Natural killer cell (primary cell): ENCODE measurements at regions of chr19 and their contacts with region 1.

Region 1: GRCh38 chr19:45016388-45017319 is 15.4 kb downstream of the RELB start:
- DNase-seq: peak; percentile 75 to 93
- ATAC-seq: peak; percentile 76 to 90 (median 79)
- H3K4me3 ChIP-seq: no peak overlapping the region
- H3K4me3 Mint-ChIP-seq: peak overlapping the region; percentile 63
- H3K27ac ChIP-seq: peak overlapping the region; percentile 78
- H3K27ac Mint-ChIP-seq: peak overlapping the region; percentile 87 to 89
- H3K4me1 ChIP-seq: peaks cover 17% of the 10 kb centered on the region
- H3K4me1 Mint-ChIP-seq: peaks cover 8 to 14% of the 10 kb centered on the region in 2 donors
- H3K27me3 ChIP-seq: no peaks in the 10 kb centered on the region
- H3K27me3 Mint-ChIP-seq: no peaks in the 10 kb centered on the region
- CTCF ChIP-seq: peak; percentile 48

Region 2: GRCh38 chr19:44984005-44984404 is 32.6 kb before region 1 on chr19:
- intact Hi-C with region 1: loop called (anchors 1 kb)
- DNase-seq: no peak
- ATAC-seq: peak; percentile 64 to 90 (median 88)
- H3K4me3 ChIP-seq: no peak overlapping the region
- H3K4me3 Mint-ChIP-seq: peak overlapping the region; percentile 78
- H3K27ac ChIP-seq: peak overlapping the region; percentile 49
- H3K27ac Mint-ChIP-seq: peak overlapping the region; percentile 93 to 94
- H3K4me1 ChIP-seq: peaks cover 37% of the 10 kb centered on the region
- H3K4me1 Mint-ChIP-seq: peaks cover 10 to 22% of the 10 kb centered on the region in 2 donors
- H3K27me3 ChIP-seq: no peaks in the 10 kb centered on the region
- H3K27me3 Mint-ChIP-seq: no peaks in the 10 kb centered on the region
- CTCF ChIP-seq: no peak

Region 3: DNA sequence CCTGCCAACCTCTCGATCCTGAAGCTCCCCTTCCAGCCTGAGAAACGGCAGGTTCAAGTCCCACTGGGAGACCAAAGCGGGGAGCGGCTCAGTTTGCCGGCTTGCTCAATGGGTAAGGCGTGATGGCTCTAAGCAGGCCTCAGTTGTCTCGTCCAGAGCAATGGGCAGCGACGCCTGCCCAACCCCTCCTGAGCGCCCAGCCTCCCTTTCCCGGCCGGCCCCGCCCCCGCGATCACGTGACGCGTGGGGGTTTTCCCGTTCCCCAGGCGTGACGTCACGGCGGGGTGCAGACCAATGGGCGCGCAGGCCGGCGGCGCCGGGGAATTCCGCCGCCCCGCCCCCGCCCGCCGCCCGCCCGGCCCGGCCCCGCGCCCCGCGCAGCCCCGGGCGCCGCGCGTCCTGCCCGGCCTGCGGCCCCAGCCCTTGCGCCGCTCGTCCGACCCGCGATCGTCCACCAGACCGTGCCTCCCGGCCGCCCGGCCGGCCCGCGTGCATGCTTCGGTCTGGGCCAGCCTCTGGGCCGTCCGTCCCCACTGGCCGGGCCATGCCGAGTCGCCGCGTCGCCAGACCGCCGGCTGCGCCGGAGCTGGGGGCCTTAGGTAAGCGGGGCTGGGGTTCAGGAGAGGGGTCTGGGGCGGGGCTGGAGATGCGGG is 15.4 kb before region 1 on chr19 and contains the start of gene RELB:
- intact Hi-C with region 1: loop called (anchors 1 kb)
- DNase-seq: peak; percentile 98 to 99
- ATAC-seq: peak; percentile 56 to 83 (median 69)
- H3K4me3 ChIP-seq: peak within 1 kb of the TSS; percentile 92
- H3K4me3 Mint-ChIP-seq: peak within 1 kb of the TSS; percentile 98
- H3K27ac ChIP-seq: peak within 1 kb of the TSS; percentile 100
- H3K27ac Mint-ChIP-seq: peak within 1 kb of the TSS; percentile 97 to 98
- H3K4me1 ChIP-seq: peaks cover 15% of the 10 kb centered on the region
- H3K4me1 Mint-ChIP-seq: peaks cover 9 to 11% of the 10 kb centered on the region in 2 donors
- H3K27me3 ChIP-seq: no peaks in the 10 kb centered on the region
- H3K27me3 Mint-ChIP-seq: no peaks in the 10 kb centered on the region
- CTCF ChIP-seq: no peak
- total RNA-seq, gene RELB: 92.4 to 119 (median 105) TPM

Region 4: DNA sequence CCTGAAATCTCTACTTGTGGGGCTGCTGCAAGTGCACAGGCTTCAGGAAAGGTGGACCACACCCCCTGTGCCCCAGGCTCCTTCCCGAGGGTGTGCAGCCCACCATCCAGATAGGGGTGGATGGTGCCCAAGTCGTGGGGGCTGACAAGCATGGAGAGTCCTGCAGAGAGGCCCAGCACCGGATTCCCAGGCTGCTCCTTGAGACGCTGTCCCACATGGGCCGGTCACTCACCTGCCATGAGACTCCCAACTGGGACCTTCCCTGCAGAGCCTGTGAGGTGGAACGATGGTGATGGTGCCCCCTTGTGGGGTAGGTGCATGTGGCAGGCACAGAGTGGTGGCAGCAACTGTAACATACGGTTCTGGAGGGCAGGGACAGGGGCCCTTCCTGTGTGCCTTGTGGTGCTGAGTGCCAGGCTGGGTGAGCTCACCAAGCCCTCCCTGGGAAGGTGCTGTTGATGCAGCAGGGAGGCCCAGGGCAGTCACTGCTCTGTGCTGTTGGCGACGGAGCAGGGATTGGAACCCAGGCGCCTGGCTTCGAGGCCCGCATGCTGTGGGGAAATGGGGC is 109.4 kb after region 1 on chr19:
- intact Hi-C with region 1: no loop called
- DNase-seq: peak; percentile 58 to 81
- ATAC-seq: peak; percentile 80 to 94 (median 91)
- H3K4me3 ChIP-seq: no peak overlapping the region
- H3K4me3 Mint-ChIP-seq: no peak overlapping the region
- H3K27ac ChIP-seq: no peak overlapping the region
- H3K27ac Mint-ChIP-seq: no peak overlapping the region
- H3K4me1 ChIP-seq: peaks cover 21% of the 10 kb centered on the region
- H3K4me1 Mint-ChIP-seq: peaks cover 21 to 39% of the 10 kb centered on the region in 2 donors
- H3K27me3 ChIP-seq: no peaks in the 10 kb centered on the region
- H3K27me3 Mint-ChIP-seq: no peaks in the 10 kb centered on the region
- CTCF ChIP-seq: peak; percentile 77